Breast epithelium (tissue), 4 donors: ENCODE measurements at regions of chr12 and their contacts with region 1.

Region 1: DNA sequence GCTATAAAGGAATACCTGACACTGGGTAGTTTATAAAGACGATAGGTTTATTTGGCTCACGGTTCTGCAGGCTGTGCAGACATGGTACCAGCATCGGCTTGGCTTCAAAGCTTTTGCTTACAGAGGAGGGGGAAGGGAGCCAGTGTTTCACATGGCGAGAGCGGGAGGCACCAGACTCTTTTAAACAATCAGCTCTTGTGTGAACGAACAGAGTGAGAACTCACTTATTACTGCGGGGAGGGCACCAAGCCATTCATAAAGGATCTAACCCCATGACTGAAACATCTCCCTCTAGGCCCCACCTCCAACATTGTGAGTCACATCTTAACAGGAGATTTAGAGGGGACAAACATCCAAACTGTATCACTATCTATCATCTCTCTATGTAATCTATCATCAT is 227.4 kb downstream of the TMEM132D start:
- DNase-seq: no peak
- H3K4me3 ChIP-seq: no peak overlapping the region
- H3K27ac ChIP-seq: no peak overlapping the region
- H3K4me1 ChIP-seq: no peaks in the 10 kb centered on the region
- H3K27me3 ChIP-seq: no peaks in the 10 kb centered on the region
- CTCF ChIP-seq: no peak
- POLR2A ChIP-seq: no peak

Region 2: GRCh38 chr12:127957001-127957660 is 1719.3 kb before region 1 on chr12:
- intact Hi-C with region 1: loop called (anchors 5 kb)
- DNase-seq: no peak
- H3K4me3 ChIP-seq: no peak overlapping the region
- H3K27ac ChIP-seq: no peak overlapping the region
- H3K4me1 ChIP-seq: no peaks in the 10 kb centered on the region
- H3K27me3 ChIP-seq: no peaks in the 10 kb centered on the region
- CTCF ChIP-seq: no peak
- POLR2A ChIP-seq: no peak